Activated naive CD4-positive, alpha-beta T cell treated with anti-CD3 and anti-CD28 coated beads for 36 hours (primary cell): ENCODE measurements at regions of chr22 and their contacts with region 1.

Region 1: DNA sequence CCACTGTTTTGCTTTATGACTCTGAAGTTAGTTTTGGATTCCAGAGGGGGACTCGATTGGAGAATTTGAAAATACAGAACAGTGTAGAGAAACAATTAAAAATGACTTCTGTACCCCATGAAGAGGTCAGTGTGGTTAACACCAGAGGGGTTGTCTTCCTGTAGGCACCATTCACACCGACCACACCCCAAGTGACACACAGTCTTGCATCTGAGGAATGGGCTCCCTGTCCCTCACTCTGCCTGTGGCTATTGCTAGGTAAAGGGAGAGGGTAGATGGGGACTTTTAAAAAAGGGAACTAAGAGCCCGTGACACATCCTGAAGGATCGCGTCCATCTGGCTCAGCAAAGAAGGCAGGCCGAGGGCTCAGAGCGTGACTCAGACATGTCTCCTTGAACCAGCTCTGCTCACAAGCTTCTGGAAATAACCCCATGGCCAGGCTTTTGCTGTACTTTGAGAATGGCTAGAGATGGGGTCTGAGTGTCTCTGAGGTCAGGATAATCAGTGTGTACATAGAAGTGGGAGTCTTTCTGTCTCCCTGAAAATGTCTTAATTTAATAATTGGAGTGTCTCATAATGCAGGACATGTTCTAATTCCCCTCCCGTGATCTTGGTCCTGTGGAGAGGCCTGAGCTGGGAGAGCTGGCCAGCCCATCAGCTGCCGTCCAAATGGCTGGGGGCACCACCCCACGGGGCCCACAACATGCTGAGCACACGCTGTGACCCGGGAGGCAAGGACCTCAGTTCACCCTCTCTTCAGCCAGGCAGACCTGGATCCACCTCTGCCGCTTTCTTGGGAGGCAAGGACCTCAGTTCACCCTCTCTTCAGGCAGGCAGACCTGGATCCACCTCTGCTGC is 39.3 kb downstream of the SGSM1 start:
- DNase-seq: peak; percentile 6
- H3K4me3 Mint-ChIP-seq: no peak overlapping the region
- H3K27ac Mint-ChIP-seq: no peak overlapping the region
- H3K4me1 Mint-ChIP-seq: no peaks in the 10 kb centered on the region
- H3K27me3 Mint-ChIP-seq: no peaks in the 10 kb centered on the region

Region 2: GRCh38 chr22:24683671-24684070 is 161.6 kb before region 1 on chr22:
- CTCF ChIA-PET with region 1: no interaction called
- intact Hi-C with region 1: no loop called
- DNase-seq: no peak
- H3K4me3 Mint-ChIP-seq: no peak overlapping the region
- H3K27ac Mint-ChIP-seq: no peak overlapping the region
- H3K4me1 Mint-ChIP-seq: peaks cover 1% of the 10 kb centered on the region
- H3K27me3 Mint-ChIP-seq: peaks cover 33% of the 10 kb centered on the region

Region 3: DNA sequence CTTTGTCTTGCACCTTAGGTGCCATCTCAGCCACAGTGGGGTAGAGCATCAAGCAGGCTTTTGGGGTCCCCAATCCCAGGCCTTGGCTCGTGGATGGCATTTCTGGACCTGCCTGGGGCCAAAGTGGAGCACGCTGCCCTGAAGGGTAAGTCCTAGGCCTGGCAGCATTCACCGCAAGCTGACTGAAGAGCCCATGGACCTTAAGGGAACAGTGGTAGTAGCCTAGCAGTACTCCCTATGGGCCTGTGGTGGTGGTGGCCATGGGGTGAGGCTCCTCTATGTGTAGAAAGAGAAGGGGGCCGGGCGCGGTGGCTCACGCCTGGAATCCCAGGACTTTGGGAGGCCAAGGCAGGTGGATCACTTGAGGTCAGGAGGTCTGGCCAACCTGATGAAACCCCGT is 107.7 kb before region 1 on chr22:
- CTCF ChIA-PET with region 1: no interaction called
- intact Hi-C with region 1: no loop called
- DNase-seq: no peak
- H3K4me3 Mint-ChIP-seq: no peak overlapping the region
- H3K27ac Mint-ChIP-seq: no peak overlapping the region
- H3K4me1 Mint-ChIP-seq: no peaks in the 10 kb centered on the region
- H3K27me3 Mint-ChIP-seq: peaks cover 21% of the 10 kb centered on the region

Region 4: DNA sequence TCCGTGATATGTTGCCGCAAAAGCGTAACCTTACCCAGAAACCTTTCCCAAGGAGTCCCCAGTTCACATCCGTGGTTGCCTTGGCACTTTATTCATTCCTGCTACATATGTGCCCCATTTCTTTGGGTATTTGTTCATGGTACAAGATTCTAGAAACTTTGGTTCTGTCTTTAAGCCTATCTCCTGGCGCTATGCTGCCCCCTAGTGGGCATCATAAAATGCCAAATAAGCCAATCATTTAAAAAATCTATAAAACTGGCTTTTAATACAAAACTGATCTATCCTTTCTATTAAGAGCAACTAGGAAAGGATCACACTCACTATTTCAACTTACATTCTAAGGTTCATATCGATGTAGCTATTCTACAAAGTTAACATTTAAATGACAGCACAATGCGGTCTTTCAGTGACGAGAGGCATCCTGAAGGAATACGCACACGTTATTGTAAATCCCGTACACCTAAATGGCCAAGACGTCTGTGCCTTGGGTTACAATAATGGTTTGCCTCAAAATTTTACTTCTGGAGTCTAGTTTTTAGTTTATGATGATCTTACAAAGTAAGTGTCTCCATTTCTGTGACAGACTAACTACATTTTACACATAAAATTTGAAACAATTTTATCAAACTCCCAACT is 87.0 kb before region 1 on chr22:
- CTCF ChIA-PET with region 1: interaction called, 13 read pairs
- intact Hi-C with region 1: no loop called
- DNase-seq: peak; percentile 75
- H3K4me3 Mint-ChIP-seq: no peak overlapping the region
- H3K27ac Mint-ChIP-seq: no peak overlapping the region
- H3K4me1 Mint-ChIP-seq: no peaks in the 10 kb centered on the region
- H3K27me3 Mint-ChIP-seq: no peaks in the 10 kb centered on the region

Region 5: GRCh38 chr22:24768537-24769374 is 76.5 kb before region 1 on chr22:
- CTCF ChIA-PET with region 1: interaction called, 41 read pairs
- intact Hi-C with region 1: loop called (anchors 1 kb)
- DNase-seq: peak; percentile 68
- H3K4me3 Mint-ChIP-seq: no peak overlapping the region
- H3K27ac Mint-ChIP-seq: no peak overlapping the region
- H3K4me1 Mint-ChIP-seq: no peaks in the 10 kb centered on the region
- H3K27me3 Mint-ChIP-seq: peaks cover under 1% of the 10 kb centered on the region

Region 6: DNA sequence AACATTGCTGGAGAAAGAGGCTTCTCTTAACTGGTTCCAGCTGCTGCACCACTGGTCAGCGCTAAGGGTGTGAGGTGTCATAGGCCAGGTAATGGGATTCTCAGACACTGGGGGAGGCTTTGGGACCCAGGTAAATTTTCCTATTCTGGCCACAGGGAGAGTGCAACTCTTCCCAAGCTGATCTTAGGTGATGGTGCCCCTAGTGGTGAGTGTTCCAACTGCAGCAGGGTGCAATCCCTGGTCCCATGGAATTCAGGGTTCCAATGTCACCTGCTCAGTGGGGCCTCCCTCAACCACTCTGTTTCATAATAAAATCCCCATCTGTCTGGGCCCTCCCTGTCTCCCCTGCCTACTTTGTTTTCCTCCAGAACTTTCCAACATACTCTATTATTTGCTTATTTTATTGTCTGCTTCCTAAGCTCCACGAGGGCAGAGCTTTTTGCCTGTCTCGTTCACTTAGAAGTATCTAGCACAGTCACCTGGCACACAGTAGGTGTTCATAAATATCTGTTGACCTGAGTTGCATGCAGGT is 42.2 kb before region 1 on chr22:
- CTCF ChIA-PET with region 1: interaction called, 24 read pairs
- intact Hi-C with region 1: loop called (anchors 1 kb)
- DNase-seq: peak; percentile 76
- H3K4me3 Mint-ChIP-seq: no peak overlapping the region
- H3K27ac Mint-ChIP-seq: no peak overlapping the region
- H3K4me1 Mint-ChIP-seq: peaks cover 12% of the 10 kb centered on the region
- H3K27me3 Mint-ChIP-seq: no peaks in the 10 kb centered on the region

Region 7: DNA sequence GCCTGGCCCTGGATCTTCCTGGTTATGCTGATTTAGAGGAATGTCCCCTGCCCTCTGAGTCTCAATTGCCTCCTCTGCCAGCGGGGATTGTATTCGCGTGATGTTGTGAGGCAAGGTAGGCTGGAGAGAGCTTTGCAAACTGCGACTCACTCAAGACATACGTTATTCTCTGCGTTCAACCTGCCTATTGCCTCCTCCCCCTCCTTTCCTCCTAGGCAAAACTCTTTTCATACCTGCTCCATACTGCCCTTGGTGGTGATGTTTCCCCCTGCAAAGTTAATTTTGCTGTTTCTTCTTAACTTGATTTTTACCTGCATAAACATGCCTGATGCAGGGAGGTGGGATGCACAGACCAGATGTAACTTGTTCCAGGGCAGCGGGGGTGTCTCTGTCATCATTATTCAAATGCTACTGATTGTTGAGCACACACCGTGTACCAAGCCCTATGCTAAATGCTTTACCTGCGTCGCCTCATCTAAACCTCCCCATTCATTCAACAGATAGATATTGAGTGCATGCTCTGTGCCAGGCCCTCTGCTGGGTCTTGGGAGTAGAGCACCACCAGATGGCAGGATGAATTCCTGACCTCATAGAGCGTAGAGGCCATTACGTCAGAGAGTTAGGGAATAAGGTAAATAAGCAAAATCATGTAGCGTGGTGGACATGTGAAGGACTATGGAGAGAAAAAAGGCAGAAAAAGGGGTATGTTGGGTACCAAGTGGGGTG is 10.3 kb before region 1 on chr22:
- CTCF ChIA-PET with region 1: interaction called, 11 read pairs
- intact Hi-C with region 1: no loop called
- DNase-seq: no peak
- H3K4me3 Mint-ChIP-seq: no peak overlapping the region
- H3K27ac Mint-ChIP-seq: no peak overlapping the region
- H3K4me1 Mint-ChIP-seq: no peaks in the 10 kb centered on the region
- H3K27me3 Mint-ChIP-seq: no peaks in the 10 kb centered on the region